ENCODE measurements at regions of chr10 and their contacts with region 1.

Region 1: GRCh38 chr10:22615819-22616499 is 98.4 kb downstream of the PIP4K2A start:
- DNase-seq: peak in 1 of 2 donors; percentile 74
- ATAC-seq: no peak
- H3K4me3 ChIP-seq: no peak overlapping the region
- H3K27ac ChIP-seq: no peak overlapping the region
- H3K4me1 ChIP-seq: peaks cover 9% of the 10 kb centered on the region in 2 donors
- H3K27me3 ChIP-seq: no peaks in the 10 kb centered on the region

Region 2: GRCh38 chr10:22779331-22780019 is 163.5 kb after region 1 on chr10:
- intact Hi-C with region 1: loop called in 1 of 2 experiments (anchors 10 kb)
- DNase-seq: no peak
- ATAC-seq: peak; percentile 46
- H3K4me3 ChIP-seq: no peak overlapping the region
- H3K27ac ChIP-seq: no peak overlapping the region
- H3K4me1 ChIP-seq: peaks cover 0 to 2% of the 10 kb centered on the region in 2 donors
- H3K27me3 ChIP-seq: no peaks in the 10 kb centered on the region

Measured in aorta (tissue), 5 donors.